ENCODE measurements at regions of chr22 and their contacts with region 1.

Region 1: DNA sequence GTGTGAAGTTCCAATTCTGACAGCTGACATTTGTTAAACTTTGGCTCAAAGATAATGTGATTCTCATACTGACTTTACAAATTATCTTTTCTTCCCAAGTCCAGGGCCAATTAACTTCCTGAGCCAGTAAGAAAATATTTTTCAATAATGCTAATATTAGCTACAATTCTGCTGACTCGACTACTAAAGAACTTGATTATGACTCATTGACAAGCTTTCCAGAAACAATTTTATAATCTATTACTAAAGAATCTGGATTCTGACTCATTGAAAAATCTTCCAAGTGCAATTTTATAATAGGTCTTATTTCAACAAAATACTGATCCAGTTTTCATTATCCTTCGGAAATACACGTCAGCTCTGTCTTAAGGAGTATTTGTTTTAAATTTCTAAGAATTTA is 12.9 kb upstream of the XKR3 start:
- H3K4me3 ChIP-seq: no peak overlapping the region
- H3K27ac ChIP-seq: no peak overlapping the region
- H3K4me1 ChIP-seq: no peaks in the 10 kb centered on the region
- CTCF ChIP-seq: no peak

Region 2: GRCh38 chr22:16783930-16784354 is 54.1 kb before region 1 on chr22:
- CTCF ChIA-PET with region 1: interaction called, 12 read pairs
- POLR2A ChIA-PET with region 1: no interaction called
- H3K4me3 ChIP-seq: no peak overlapping the region
- H3K27ac ChIP-seq: no peak overlapping the region
- H3K4me1 ChIP-seq: no peaks in the 10 kb centered on the region
- CTCF ChIP-seq: no peak

Region 3: DNA sequence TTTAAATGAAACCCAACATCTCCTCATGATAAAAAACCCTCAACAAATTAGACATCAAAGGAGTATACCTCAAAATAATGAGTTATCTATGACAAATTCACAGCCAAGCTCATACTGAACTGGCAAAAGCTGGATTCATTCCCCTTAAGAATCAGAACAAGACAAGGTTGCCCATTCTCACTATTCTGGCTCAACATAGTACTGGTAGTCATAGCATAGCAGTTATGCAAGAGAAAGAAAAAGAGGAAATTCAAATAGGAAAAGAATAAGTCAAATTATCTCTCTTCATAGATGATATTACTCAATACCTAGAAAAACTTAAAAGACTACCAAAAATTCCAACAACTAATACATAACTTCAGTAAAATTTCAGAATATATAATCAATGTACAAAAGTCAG is 16.6 kb after region 1 on chr22:
- CTCF ChIA-PET with region 1: no interaction called
- POLR2A ChIA-PET with region 1: no interaction called
- H3K4me3 ChIP-seq: no peak overlapping the region
- H3K27ac ChIP-seq: no peak overlapping the region
- H3K4me1 ChIP-seq: no peaks in the 10 kb centered on the region
- CTCF ChIP-seq: no peak

Measured in HEK293 (cell line).